ENCODE measurements at regions of chr9 and their contacts with region 1.

Region 1: GRCh38 chr9:127014216-127014615 is 99.6 kb downstream of the RALGPS1 start:
- DNase-seq: no peak

Region 2: DNA sequence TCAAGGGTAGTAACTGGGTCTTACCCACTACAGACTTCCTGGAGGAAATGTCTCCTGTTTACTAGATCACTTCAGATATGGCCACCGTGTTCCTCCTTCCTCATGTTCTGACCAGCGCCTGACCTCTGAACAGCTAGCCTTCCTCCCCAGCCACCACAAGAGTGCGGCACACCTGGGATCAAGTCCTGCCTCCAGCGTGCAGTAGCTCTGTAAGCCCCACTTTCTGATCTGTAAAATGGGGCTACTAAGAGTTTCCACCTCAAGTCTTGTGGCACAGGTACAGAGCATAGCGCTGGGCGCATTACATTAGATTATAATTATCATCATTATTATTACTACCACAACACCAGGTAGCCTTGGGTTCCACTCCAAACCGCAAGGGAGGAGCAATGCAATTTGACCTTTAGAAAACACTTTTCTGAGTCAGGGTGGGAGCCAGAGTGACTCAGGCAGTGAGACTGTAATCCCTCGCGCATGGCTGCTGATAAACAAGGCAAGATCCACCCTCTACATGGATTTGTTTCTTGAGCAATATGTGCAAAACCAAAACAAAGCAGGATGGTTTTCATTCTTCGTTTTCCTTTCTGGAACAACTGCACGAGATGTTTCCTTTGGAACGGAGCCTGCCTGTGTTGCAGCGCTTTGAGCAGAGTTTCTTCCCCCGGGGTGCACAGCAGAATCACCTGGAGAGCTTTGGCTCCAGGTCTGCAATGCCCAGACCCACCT is 173.2 kb after region 1 on chr9:
- intact Hi-C with region 1: loop called (anchors 10 kb)
- DNase-seq: peak in 1 of 42 donors; percentile 0